ENCODE measurements at regions of chr17 and their contacts with region 1.

Region 1: GRCh38 chr17:40062329-40063186 is at the start of gene THRA:
- DNase-seq: peak; percentile 76 to 83
- ATAC-seq: peak; percentile 54 to 92 (median 68)
- H3K4me3 ChIP-seq: peak within 1 kb of the TSS; percentile 85 to 100 (median 99)
- H3K27ac ChIP-seq: peak within 1 kb of the TSS; percentile 94 to 100 (median 98)
- H3K4me1 ChIP-seq: peaks cover 26 to 62% (median 56%) of the 10 kb centered on the region in 9 donors
- H3K27me3 ChIP-seq: no peaks in the 10 kb centered on the region
- CTCF ChIP-seq: peak in 5 of 9 donors; percentile 4 to 48 (median 20)
- total RNA-seq, gene THRA: 59.8 to 102 (median 69.7) TPM

Region 2: GRCh38 chr17:40005520-40005919 is 57.0 kb before region 1 on chr17:
- intact Hi-C with region 1: no loop called
- DNase-seq: no peak
- ATAC-seq: no peak
- H3K4me3 ChIP-seq: no peak overlapping the region
- H3K27ac ChIP-seq: no peak overlapping the region
- H3K4me1 ChIP-seq: no peaks in the 10 kb centered on the region
- H3K27me3 ChIP-seq: no peaks in the 10 kb centered on the region
- CTCF ChIP-seq: no peak

Region 3: DNA sequence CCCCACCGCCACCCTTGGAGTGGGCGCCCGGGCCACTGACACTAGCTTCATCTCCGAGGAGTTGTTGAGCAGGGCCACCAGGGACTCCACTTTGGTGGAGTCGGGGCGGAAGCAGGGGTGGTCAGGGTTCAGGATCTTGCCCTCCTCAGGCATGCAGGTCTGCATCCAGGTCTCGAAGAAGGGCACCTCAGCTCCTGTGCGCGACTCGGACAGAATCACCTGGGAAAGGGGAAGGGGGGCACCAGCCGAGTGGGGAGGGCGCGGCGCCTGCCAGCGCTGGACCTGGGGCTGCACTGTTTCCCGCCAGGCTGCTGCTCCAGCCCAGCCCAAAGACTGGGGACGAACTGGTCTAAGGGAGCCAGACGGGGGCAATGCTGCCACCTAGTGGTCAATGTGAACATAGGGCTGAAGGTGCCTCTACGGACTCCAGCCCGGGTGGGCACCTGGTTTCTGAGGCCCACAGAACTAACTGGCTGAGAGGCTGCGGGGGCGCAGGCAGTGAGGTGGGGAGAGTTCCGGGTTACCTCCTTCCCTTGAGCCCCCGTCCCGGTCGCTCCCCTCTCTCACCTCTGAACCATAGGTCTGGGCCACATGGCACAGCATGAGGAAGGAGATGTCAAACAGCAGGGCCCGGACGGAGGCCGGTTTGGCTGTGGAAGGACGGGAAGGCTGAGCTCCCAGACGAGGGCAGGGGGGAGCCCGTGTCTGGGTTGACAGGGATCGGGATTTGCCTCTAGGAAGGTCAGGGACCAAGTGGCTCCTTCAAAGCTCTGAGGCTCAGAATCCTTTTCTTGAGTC is 35.5 kb before region 1 on chr17:
- intact Hi-C with region 1: no loop called
- DNase-seq: peak; percentile 78 to 87
- ATAC-seq: peak; percentile 87 to 94 (median 91)
- H3K4me3 ChIP-seq: no peak overlapping the region
- H3K27ac ChIP-seq: peak overlapping the region in 2 of 10 donors; percentile 18 to 31
- H3K4me1 ChIP-seq: peaks cover 8 to 38% (median 16%) of the 10 kb centered on the region in 9 donors
- H3K27me3 ChIP-seq: no peaks in the 10 kb centered on the region
- CTCF ChIP-seq: peak; percentile 91 to 97 (median 95)

Region 4: DNA sequence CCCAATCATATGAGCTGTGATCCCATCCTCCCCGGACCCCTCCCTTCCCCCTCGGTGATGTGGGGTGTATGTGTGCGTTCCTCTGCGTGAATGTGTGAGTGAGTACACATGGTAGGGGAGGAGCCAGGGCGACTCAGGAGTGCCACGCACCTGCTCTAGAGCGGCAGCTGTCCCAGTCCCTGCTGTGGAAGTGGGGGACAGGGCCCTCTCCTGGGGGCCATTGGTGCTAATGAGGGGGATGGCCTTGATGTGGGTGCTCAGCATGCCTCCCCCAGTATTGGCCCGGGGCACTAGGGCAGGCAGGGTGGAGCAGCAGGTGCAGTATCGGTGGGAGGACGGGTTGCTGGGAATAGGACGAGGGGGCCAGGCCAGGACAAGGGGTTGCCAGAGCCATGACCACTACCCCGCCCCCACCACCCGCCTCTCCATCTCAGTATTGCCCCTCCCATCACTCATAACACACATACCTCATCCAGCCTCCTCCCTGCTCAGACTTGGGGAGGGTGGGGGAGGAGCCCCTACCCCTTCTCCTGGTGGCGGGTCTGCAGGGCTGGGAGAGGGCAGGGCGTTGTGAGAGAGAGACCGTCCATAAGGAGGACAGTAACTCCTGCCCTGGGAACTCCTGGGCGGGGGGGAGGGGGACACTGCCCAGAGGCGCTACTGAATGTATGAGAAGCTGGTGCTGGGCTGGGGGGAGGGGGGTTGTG is 29.3 kb after region 1 on chr17:
- intact Hi-C with region 1: loop called in 4 of 10 experiments (anchors 2 to 5 kb)
- DNase-seq: peak in 1 of 2 donors; percentile 41
- ATAC-seq: peak in 6 of 8 donors; percentile 1 to 33 (median 14)
- H3K4me3 ChIP-seq: no peak overlapping the region
- H3K27ac ChIP-seq: peak overlapping the region; percentile 36 to 99 (median 95)
- H3K4me1 ChIP-seq: peaks cover 39 to 79% (median 69%) of the 10 kb centered on the region in 9 donors
- H3K27me3 ChIP-seq: no peaks in the 10 kb centered on the region
- CTCF ChIP-seq: no peak

Region 5: GRCh38 chr17:40098846-40099618 is 36.5 kb after region 1 on chr17:
- intact Hi-C with region 1: loop called in 3 of 10 experiments (anchors 5 kb)
- DNase-seq: peak; percentile 100
- ATAC-seq: peak; percentile 81 to 88 (median 84)
- H3K4me3 ChIP-seq: peak overlapping the region; percentile 59 to 100 (median 84)
- H3K27ac ChIP-seq: peak overlapping the region; percentile 81 to 99 (median 95)
- H3K4me1 ChIP-seq: peaks cover 52 to 90% (median 79%) of the 10 kb centered on the region in 9 donors
- H3K27me3 ChIP-seq: no peaks in the 10 kb centered on the region
- CTCF ChIP-seq: no peak

Measured in heart right ventricle (tissue), 16 donors.